Activated naive CD4-positive, alpha-beta T cell treated with anti-CD3 and anti-CD28 coated beads for 36 hours (primary cell): ENCODE measurements at regions of chr16 and their contacts with region 1.

Region 1: DNA sequence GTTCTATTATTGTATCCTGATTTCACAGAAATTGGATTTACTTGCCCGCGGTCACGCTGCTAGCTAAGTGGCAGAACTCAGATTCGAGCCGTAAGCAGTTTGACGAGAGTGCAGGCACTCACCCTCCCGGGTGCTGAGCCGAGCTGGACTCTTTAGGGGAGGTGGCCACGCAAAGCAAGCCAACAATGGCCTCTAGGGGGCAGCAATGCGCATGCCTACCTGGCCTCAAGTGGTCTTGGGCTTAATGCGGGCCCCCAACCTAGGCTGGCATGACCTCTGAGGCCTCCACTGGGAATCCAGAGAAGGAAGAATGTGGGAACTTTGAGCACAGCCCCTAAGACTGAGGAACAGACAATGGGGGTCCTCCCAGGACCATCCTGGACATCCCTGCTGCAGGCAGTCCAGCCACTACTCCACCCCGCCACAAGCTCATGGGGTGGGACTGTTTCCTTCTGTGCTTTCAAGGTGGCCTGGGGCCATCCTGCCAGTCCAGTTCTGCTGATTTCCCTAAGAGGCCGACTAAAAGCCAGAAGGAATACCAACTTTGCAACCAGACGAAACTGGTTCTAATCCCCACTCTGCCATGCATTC is 276.5 kb downstream of the XYLT1 start:
- DNase-seq: peak; percentile 72
- H3K4me3 Mint-ChIP-seq: no peak overlapping the region
- H3K27ac Mint-ChIP-seq: no peak overlapping the region
- H3K4me1 Mint-ChIP-seq: no peaks in the 10 kb centered on the region
- H3K27me3 Mint-ChIP-seq: no peaks in the 10 kb centered on the region

Region 2: GRCh38 chr16:17556276-17557052 is 362.2 kb after region 1 on chr16:
- CTCF ChIA-PET with region 1: no interaction called
- intact Hi-C with region 1: loop called (anchors 10 kb)
- DNase-seq: peak; percentile 8
- H3K4me3 Mint-ChIP-seq: no peak overlapping the region
- H3K27ac Mint-ChIP-seq: no peak overlapping the region
- H3K4me1 Mint-ChIP-seq: peaks cover 2% of the 10 kb centered on the region
- H3K27me3 Mint-ChIP-seq: peaks cover 6% of the 10 kb centered on the region